ENCODE measurements at regions of chr14 and their contacts with region 1.

Region 1: GRCh38 chr14:20855652-20856291 is 35.4 kb upstream of the RNASE3 start:
- ATAC-seq: peak; percentile 72 to 98 (median 87)
- H3K4me3 ChIP-seq: no peak overlapping the region
- H3K27ac ChIP-seq: no peak overlapping the region
- H3K4me1 ChIP-seq: no peaks in the 10 kb centered on the region

Region 2: DNA sequence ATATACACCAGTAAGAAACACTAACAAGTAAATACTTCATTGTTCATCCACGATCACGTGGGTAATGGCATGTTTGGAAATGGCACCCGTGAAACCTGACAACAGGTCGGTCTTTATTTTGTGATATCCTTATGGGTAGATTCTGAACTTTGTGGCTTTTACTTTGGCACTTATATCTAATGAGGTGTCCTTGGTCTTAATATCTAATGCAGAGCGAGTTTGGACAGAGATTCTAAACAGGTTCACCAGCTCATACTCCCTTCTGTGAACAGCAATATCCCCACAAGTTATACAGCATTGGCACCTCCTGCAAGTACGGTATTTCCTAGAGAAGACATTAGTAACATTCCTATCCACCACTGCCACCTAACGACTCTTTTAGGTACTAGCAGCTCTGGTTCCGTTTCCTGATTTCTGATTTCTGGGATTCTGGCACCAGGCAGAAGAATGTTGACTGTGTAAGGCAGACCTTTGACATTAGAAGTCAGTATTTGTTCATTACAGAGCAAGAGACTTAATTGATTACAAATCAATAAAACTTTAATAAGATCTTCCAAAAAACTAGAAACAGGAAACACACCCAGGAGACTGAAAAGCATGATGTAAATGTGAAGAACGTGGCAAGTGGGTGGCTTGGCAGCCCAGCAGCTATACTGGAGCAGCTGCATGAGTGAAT is 164.8 kb before region 1 on chr14:
- in situ Hi-C with region 1: loop called in 2 of 9 experiments (anchors 10 kb)
- ATAC-seq: peak; percentile 74 to 94 (median 81)
- H3K4me3 ChIP-seq: no peak overlapping the region
- H3K27ac ChIP-seq: no peak overlapping the region
- H3K4me1 ChIP-seq: no peaks in the 10 kb centered on the region

Region 3: DNA sequence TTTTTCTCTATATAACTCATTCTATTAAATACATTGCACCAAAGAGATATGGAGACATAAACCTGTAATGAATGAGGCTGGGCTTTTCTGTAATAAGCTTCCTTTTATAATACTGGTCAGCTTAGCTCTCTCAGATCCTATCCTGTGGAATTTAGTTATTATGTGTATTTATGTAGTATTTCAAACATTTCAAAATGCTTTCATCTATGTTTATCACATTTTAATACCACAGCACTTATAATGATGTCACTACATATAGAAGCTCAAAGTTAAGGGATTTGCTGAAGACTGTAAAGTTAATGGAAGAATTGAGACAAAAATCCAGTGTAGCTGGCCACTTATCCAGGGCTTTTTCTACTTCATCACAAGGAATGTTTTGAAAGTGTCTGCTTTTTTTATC is 155.8 kb before region 1 on chr14:
- in situ Hi-C with region 1: loop called in 4 of 9 experiments (anchors 5 to 25 kb)
- ATAC-seq: no peak
- H3K4me3 ChIP-seq: no peak overlapping the region
- H3K27ac ChIP-seq: no peak overlapping the region
- H3K4me1 ChIP-seq: no peaks in the 10 kb centered on the region

Region 4: GRCh38 chr14:20714593-20715250 is 141.1 kb before region 1 on chr14:
- in situ Hi-C with region 1: loop called in 1 of 9 experiments (anchors 25 kb)
- ATAC-seq: peak in 1 of 8 experiments; percentile 41
- H3K4me3 ChIP-seq: no peak overlapping the region
- H3K27ac ChIP-seq: no peak overlapping the region
- H3K4me1 ChIP-seq: no peaks in the 10 kb centered on the region

Region 5: DNA sequence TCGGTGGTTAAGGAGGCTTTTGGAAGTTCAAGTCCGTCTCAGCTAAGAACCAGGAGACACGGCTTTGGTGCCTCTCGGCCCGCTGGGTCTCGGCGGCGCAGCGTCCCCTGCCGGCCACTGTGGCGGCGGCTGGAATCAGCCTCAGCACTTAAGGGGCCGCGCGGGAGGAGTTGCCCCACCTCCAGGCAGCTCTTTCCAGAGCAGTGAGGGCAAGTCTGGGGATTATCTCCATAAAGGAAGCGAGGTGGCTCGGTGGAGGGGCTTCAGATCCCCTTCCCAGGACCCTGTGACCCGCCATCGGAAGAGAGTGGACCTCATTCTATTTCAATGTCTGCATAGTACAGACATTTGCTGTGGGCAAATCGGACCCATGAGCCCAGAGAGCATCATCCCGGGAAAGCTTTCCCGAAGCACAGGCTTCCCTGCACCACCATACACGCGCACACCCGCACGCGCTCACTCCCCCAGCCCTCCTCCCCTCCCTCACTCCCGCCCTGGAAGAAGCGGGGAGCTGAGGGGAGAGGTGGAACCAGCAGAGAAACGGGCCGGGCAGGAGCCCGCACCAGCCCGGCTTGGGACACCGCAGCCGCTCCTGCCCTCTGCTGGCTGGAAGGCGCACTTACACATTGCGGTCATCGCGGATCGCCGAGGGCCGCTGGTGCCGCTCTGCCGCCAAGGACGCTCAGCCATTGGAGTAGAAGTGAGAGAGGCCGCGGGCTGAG is 115.4 kb after region 1 on chr14:
- in situ Hi-C with region 1: loop called in 3 of 9 experiments (anchors 10 to 25 kb)
- ATAC-seq: peak; percentile 84 to 96 (median 94)
- H3K4me3 ChIP-seq: peak overlapping the region; percentile 45 to 56 (median 46)
- H3K27ac ChIP-seq: peak overlapping the region; percentile 15 to 52
- H3K4me1 ChIP-seq: peaks cover 0 to 4% of the 10 kb centered on the region in 2 donors